ENCODE measurements at regions of chr6 and their contacts with region 1.

Region 1: DNA sequence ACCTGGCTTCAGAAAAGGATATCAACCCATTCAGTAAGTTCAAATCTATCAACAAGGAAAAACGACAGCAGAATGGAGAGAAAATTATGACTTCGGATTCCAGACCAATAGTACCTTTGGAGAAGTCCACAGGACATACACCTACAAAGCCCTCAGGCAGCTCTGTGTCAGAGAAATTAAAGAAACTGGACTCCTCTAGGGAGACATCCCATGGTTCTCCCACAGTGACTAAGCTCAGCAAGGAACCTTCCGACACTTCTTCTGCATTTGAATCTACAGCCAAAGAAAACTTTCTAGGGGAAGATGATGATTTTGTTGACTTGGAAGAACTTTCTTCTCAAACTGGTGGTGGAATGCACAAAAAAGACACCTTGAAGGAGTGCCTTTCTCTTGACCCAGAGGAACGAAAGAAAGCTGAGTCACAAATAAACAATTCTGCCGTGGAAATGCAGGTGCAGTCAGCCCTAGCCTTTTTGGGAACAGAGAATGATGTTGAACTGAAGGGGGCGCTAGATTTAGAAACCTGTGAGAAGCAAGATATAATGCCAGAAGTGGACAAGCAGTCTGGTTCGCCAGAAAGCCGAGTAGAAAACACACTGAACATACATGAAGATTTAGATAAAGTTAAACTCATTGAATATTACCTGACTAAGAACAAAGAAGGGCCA is 67.4 kb upstream of the HINT3 start:
- DNase-seq: peak; percentile 26 to 56 (median 32)
- ATAC-seq: peak; percentile 67
- H3K4me3 ChIP-seq: no peak overlapping the region
- H3K27ac ChIP-seq: no peak overlapping the region
- H3K4me1 ChIP-seq: no peaks in the 10 kb centered on the region
- H3K27me3 ChIP-seq: no peaks in the 10 kb centered on the region
- CTCF ChIP-seq: peak in 6 of 7 experiments; percentile 36 to 58 (median 50)
- POLR2A ChIP-seq: no peak

Region 2: GRCh38 chr6:125956506-125957390 is 67.6 kb after region 1 on chr6 and contains the start of gene HINT3:
- intact Hi-C with region 1: no loop called
- DNase-seq: peak; percentile 97 to 98 (median 98)
- ATAC-seq: peak; percentile 91
- H3K4me3 ChIP-seq: peak within 1 kb of the TSS; percentile 81 to 82
- H3K27ac ChIP-seq: peak within 1 kb of the TSS; percentile 78 to 96 (median 93)
- H3K4me1 ChIP-seq: peaks cover 42% of the 10 kb centered on the region
- H3K27me3 ChIP-seq: no peaks in the 10 kb centered on the region
- CTCF ChIP-seq: peak; percentile 97 to 99 (median 98)
- POLR2A ChIP-seq: peak in 2 of 3 donors; percentile 77 to 80
- total RNA-seq, gene HINT3: 8.8 to 14.5 TPM

Region 3: DNA sequence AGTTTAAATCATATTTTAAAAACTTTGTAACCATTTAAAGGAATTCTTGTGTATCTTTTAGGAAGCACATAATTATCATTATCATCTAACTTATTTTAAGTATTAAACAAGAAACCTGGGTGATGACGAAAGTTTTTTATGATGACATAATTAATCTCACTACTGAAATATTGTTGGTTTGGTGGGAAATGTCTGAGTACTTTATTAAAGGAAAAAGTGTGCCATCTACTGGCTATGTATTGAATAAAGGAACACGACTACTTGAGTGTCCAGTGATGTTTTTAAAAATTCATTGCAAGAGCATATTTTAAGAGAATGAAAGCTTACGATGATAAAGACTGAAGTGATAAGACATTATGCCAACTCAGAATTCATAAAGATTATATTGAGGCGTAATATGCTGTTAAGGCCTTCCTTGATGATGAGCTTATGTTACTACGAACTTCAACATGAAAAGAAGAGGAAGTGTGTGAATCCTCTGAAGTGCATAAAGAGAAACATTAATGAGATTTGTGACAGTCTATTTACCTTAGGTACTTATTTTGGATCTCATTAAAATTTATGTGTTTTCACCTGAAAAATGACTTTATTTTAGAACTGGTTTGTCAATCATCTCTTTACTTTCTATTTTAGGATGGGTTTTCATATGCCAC is 85.2 kb after region 1 on chr6:
- intact Hi-C with region 1: loop called (anchors 10 kb)
- DNase-seq: no peak
- ATAC-seq: peak; percentile 80
- H3K4me3 ChIP-seq: no peak overlapping the region
- H3K27ac ChIP-seq: no peak overlapping the region
- H3K4me1 ChIP-seq: peaks cover 4% of the 10 kb centered on the region
- H3K27me3 ChIP-seq: no peaks in the 10 kb centered on the region
- CTCF ChIP-seq: peak; percentile 12 to 68 (median 61)
- POLR2A ChIP-seq: no peak